ENCODE measurements at regions of chr2 and their contacts with region 1.

Region 1: DNA sequence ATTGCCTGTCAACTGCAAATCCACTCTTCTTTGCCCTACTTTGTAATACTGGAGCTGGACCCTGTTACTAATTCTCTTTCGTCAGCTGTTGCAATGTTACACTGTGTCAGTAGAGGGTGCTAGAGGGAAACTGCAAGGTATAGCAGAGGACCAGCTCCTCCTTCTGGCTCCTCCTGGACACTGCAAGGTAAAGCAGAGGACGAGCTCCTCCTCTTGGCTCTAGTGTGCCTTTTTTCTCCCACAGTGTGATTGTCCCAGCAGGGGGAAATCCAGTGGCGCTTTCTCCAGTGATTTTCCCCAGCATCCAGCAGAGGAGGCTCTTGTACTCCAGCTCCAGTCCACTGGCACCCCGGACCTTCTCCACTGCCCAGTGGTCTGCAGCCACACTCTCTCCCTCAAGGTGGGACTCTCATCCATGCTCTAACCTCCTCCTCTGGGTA is 95.6 kb downstream of the CAPN13 start:
- DNase-seq: peak; percentile 86
- H3K4me3 ChIP-seq: peak overlapping the region in 1 of 2 experiments; percentile 14; a peak in 1 of 4 replicates
- H3K27ac ChIP-seq: no peak overlapping the region
- H3K4me1 ChIP-seq: peaks cover 0 to 3% of the 10 kb centered on the region in 2 experiments; a peak in 1 of 4 replicates
- H3K27me3 ChIP-seq: no peaks in the 10 kb centered on the region
- CTCF ChIP-seq: peak; percentile 99
- EP300 ChIP-seq: no peak
- RAD21 ChIP-seq: peak; percentile 91

Region 2: GRCh38 chr2:30178618-30179434 is 532.8 kb before region 1 on chr2:
- CTCF ChIA-PET with region 1: interaction called, 17 read pairs
- POLR2A ChIA-PET with region 1: no interaction called
- DNase-seq: peak; percentile 23
- H3K4me3 ChIP-seq: no peak overlapping the region
- H3K27ac ChIP-seq: no peak overlapping the region
- H3K4me1 ChIP-seq: no peaks in the 10 kb centered on the region
- H3K27me3 ChIP-seq: no peaks in the 10 kb centered on the region
- CTCF ChIP-seq: no peak
- EP300 ChIP-seq: no peak
- RAD21 ChIP-seq: no peak

Region 3: DNA sequence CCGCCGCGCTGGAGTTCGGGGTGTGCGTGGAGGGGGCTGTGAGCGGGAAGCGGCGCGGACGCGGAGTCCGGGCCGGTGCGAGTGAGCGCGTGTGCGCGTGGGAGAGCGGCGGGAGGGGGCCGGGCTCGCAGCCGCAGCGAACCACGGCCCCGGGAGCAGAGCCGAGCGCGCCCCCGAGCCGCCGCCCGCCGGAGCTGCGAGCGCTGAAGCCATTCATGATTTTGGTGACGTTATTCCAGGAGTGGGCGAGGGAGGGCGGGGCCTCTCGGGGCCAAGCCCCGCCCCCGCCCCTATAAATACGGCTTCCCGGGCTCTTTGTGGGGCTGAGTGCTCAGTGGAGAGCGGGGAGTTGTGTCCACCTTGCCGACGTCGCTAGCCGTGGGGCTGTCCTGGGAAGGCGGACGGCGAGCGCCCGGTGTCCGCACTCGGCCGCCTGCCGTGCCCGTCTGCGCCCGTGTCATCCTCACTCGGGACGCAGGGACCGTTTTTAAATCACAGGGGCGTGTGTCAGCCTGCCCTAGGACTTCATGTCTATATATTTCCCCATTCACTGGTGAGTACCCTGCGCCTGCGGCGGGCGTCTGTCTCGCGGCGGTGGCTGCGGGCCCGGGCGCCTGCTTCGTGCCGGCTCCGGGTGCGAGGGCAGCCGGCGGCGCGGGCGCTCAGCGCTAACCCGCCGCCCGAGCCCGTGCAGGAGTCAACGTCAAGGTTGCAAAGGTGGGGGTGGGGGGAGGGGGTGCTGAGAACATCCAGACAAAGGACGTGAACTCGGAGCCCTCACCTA is 480.3 kb before region 1 on chr2 and contains the start of gene LBH:
- CTCF ChIA-PET with region 1: interaction called, 262 read pairs
- POLR2A ChIA-PET with region 1: no interaction called
- DNase-seq: peak; percentile 98
- H3K4me3 ChIP-seq: peak within 1 kb of the TSS; percentile 73 to 92
- H3K27ac ChIP-seq: peak within 1 kb of the TSS; percentile 43 to 62; a peak in 3 of 4 replicates
- H3K4me1 ChIP-seq: peaks cover under 1 to 22% of the 10 kb centered on the region in 2 experiments; a peak in 2 of 4 replicates
- H3K27me3 ChIP-seq: no peaks in the 10 kb centered on the region
- CTCF ChIP-seq: no peak
- EP300 ChIP-seq: peak in 1 of 2 experiments; percentile 11; a peak in 1 of 4 replicates
- RAD21 ChIP-seq: no peak
- polyA plus RNA-seq, gene LBH: 22.8 and 26.4 TPM in 2 replicates

Region 4: DNA sequence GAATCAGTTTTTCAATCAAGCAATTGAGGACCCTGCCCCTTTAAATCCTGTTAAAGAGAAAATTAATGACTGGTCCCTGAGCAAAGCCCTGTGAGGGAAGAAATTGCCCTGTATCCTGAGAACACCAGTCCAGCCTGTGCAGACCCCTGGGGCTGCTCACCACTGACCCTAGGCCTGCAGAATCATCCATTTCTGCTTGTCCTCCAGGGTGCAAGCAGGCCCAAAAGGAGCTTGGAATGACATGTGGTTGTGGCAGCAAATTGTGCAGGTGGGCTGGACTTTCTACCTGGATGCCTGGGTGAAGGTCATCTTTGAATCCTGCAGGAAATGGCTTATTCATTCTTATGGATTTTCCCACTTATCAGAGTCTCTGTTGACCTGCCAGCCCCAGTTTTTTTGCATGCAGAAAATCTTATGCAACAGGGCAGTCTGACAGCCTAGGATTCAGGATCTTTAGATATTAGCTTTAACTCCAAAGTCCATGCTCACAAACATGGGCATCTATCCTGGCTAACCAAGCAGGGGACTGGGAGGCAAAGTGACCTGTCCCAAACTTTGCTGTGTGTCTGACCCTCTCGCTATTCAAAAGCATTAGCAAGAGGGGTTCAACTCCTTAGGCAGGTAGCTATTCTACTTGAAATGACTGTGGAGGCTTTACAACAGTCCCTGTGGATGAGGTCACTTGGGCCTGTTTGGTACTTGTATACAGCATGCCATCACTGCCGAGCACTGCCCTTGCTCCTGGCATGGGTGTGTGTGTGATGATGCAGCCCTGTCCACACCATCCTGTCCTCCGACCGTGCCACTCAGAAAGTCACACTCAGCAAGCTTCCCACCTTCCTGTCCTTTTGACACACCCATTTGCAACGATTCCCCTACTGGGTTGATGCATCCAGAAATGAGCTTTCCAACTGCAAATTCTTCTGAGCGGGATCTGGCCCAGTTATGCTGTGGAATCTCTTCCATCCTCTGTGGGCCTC is 10.3 kb after region 1 on chr2:
- CTCF ChIA-PET with region 1: interaction called, 63 read pairs
- POLR2A ChIA-PET with region 1: no interaction called
- DNase-seq: no peak
- H3K4me3 ChIP-seq: no peak overlapping the region
- H3K27ac ChIP-seq: no peak overlapping the region
- H3K4me1 ChIP-seq: no peaks in the 10 kb centered on the region; a peak in 1 of 4 replicates
- H3K27me3 ChIP-seq: peaks cover 18% of the 10 kb centered on the region; the same call in 1 of the 2 replicates
- CTCF ChIP-seq: no peak
- EP300 ChIP-seq: no peak
- RAD21 ChIP-seq: no peak

Region 5: GRCh38 chr2:30871980-30872789 is 160.5 kb after region 1 on chr2:
- CTCF ChIA-PET with region 1: interaction called, 291 read pairs
- POLR2A ChIA-PET with region 1: no interaction called
- DNase-seq: no peak
- H3K4me3 ChIP-seq: no peak overlapping the region
- H3K27ac ChIP-seq: peak overlapping the region in 1 of 2 experiments; percentile 99; a peak in 2 of 4 replicates
- H3K4me1 ChIP-seq: peaks cover 0 to 32% of the 10 kb centered on the region in 2 experiments; a peak in 2 of 4 replicates
- H3K27me3 ChIP-seq: no peaks in the 10 kb centered on the region
- CTCF ChIP-seq: no peak
- EP300 ChIP-seq: peak in 1 of 2 experiments; percentile 46; a peak in 1 of 4 replicates
- RAD21 ChIP-seq: no peak; the same call in 1 of the 2 replicates

Region 6: DNA sequence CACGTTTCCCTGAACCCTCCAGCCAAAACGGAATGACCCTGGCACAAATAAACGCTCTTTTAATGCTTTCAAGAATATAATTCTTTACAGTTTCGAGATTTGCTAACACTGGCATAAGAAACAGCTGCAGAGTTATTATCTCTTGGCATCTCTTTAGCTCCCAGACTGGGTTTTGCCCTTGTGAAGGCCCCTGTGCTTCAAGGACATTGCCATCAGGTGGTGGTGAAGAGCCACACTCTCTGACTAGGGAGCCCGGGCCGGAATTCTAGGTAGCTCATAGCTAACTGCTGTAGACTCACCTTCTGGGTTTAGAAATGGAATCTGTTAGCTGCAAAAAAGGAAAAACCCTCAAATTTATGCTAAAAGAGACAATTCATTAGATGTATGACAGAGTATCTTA is 439.8 kb after region 1 on chr2:
- CTCF ChIA-PET with region 1: interaction called, 67 read pairs
- POLR2A ChIA-PET with region 1: no interaction called
- DNase-seq: peak; percentile 40
- H3K4me3 ChIP-seq: no peak overlapping the region
- H3K27ac ChIP-seq: no peak overlapping the region
- H3K4me1 ChIP-seq: no peaks in the 10 kb centered on the region
- H3K27me3 ChIP-seq: 0 out of 2 replicates have a peak, but pooled peaks cover 5% of the 10 kb centered on the region
- CTCF ChIP-seq: 0 out of 2 replicates have a peak, but pooled peaks have one; percentile 19
- EP300 ChIP-seq: no peak
- RAD21 ChIP-seq: peak; percentile 39